ENCODE measurements at regions of chr5 and their contacts with region 1.

Region 1: DNA sequence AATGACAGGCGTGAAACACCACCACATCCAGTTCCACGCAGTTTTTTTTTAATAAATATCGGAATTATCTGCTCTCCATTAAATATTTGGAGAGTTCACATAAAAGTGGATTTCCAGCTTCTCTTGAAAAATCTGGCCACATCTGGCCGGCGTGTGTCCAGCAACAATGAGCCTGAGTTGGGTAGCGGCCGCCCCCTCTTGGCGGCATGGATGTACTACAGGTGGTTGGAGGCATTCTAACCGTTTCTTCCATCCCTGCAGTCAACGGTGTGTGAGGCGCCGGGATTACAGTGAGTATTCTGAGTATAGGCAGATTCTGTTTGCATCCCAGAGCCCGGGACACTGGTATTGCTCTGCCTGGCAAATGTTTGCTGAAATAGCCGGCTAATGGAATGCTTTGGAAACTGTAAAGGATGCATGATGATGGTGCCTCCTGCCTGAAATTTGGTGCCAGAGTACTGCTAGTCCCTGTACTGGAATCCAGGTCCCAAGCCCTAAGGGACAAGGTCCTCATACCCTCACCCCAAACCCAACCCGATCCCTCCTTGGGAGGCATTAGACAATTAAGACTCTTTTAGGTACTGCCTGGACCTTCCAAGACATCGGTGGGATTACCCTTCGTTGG is 13.6 kb upstream of the GM2A start:
- DNase-seq: peak; percentile 85
- H3K4me3 ChIP-seq: peak overlapping the region in 1 of 2 experiments; percentile 11; a peak in 1 of 4 replicates
- H3K27ac ChIP-seq: no peak overlapping the region
- H3K4me1 ChIP-seq: no peaks in the 10 kb centered on the region
- H3K27me3 ChIP-seq: no peaks in the 10 kb centered on the region
- CTCF ChIP-seq: peak; percentile 77
- EP300 ChIP-seq: no peak
- RAD21 ChIP-seq: peak; percentile 76

Region 2: GRCh38 chr5:151223469-151224264 is 15.7 kb before region 1 on chr5 and contains the start of gene CCDC69:
- CTCF ChIA-PET with region 1: interaction called, 29 read pairs
- POLR2A ChIA-PET with region 1: no interaction called
- DNase-seq: peak; percentile 89
- H3K4me3 ChIP-seq: peak within 1 kb of the TSS; percentile 65 to 89
- H3K27ac ChIP-seq: no peak within 1 kb of the TSS
- H3K4me1 ChIP-seq: no peaks in the 10 kb centered on the region; a peak in 1 of 4 replicates
- H3K27me3 ChIP-seq: no peaks in the 10 kb centered on the region
- CTCF ChIP-seq: peak; percentile 26; the same call in 1 of the 2 replicates
- EP300 ChIP-seq: peak in 1 of 2 experiments; percentile 9; a peak in 1 of 4 replicates
- RAD21 ChIP-seq: no peak
- polyA plus RNA-seq, gene CCDC69: 0.38 and 0.54 TPM in 2 replicates

Region 3: DNA sequence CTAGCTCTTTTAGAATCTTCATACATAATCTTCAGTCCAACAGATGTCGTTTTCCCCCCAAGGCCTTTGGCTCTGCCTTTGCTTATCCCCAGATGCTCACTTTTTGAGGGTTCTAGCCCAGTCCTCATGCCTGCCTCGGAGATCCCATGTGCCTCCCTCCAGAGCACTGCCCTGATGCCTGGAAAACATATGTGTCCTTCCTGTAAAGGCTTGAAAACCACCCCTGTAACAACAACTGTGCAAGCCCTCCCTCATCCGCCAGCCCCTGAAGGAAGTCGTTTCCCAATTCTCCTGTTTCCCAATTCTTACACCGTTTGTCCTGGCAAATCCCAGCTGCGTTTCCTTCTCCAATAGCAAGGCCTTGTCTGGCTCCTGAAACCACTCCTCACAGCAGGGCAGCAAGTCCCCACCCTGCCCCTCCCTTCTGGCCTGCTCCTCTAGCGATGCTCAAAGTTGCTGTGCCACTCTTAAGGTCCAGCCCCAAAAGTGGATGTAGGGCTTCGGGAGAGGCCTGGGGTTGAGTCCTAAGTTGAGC is 260.2 kb after region 1 on chr5:
- CTCF ChIA-PET with region 1: no interaction called
- POLR2A ChIA-PET with region 1: no interaction called
- DNase-seq: peak; percentile 27
- H3K4me3 ChIP-seq: no peak overlapping the region
- H3K27ac ChIP-seq: no peak overlapping the region
- H3K4me1 ChIP-seq: peaks cover 0 to 11% of the 10 kb centered on the region in 2 experiments; a peak in 2 of 4 replicates
- H3K27me3 ChIP-seq: no peaks in the 10 kb centered on the region
- CTCF ChIP-seq: no peak
- EP300 ChIP-seq: no peak
- RAD21 ChIP-seq: no peak

Measured in SK-N-SH (cell line).